Mammary epithelial cell (primary cell): ENCODE measurements at regions of chr9 and their contacts with region 1.

Region 1: DNA sequence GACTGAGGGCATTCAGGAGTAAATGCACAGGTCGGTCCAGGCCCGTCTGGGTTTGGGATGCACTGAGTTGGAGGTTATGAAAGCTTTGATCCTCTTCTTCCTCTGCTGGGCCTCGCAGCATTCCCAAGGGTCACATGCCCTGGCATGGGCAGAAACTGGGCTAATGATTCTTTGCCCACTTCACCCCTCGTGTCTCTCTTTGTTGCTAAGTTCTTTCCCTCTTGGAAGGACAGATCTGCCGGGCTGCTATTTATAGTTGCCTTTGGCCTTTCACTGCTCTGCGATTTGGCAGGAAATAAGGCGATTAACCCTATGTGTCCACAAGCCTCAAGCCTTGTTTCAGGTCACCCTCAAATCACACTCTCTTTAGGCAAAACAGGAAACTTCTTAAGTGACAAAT is 66.9 kb downstream of the ENTREP1 start:
- DNase-seq: no peak
- H3K4me3 ChIP-seq: no peak overlapping the region
- H3K27ac ChIP-seq: no peak overlapping the region
- H3K4me1 ChIP-seq: no peaks in the 10 kb centered on the region
- H3K27me3 ChIP-seq: no peaks in the 10 kb centered on the region
- CTCF ChIP-seq: no peak

Region 2: GRCh38 chr9:69295872-69296552 is 95.9 kb before region 1 on chr9:
- CTCF ChIA-PET with region 1: no interaction called
- dilution Hi-C with region 1: loop called (anchors 5 kb)
- in situ Hi-C with region 1: no loop called
- intact Hi-C with region 1: no loop called
- DNase-seq: no peak
- H3K4me3 ChIP-seq: no peak overlapping the region
- H3K27ac ChIP-seq: no peak overlapping the region
- H3K4me1 ChIP-seq: no peaks in the 10 kb centered on the region
- H3K27me3 ChIP-seq: no peaks in the 10 kb centered on the region
- CTCF ChIP-seq: no peak

Region 3: DNA sequence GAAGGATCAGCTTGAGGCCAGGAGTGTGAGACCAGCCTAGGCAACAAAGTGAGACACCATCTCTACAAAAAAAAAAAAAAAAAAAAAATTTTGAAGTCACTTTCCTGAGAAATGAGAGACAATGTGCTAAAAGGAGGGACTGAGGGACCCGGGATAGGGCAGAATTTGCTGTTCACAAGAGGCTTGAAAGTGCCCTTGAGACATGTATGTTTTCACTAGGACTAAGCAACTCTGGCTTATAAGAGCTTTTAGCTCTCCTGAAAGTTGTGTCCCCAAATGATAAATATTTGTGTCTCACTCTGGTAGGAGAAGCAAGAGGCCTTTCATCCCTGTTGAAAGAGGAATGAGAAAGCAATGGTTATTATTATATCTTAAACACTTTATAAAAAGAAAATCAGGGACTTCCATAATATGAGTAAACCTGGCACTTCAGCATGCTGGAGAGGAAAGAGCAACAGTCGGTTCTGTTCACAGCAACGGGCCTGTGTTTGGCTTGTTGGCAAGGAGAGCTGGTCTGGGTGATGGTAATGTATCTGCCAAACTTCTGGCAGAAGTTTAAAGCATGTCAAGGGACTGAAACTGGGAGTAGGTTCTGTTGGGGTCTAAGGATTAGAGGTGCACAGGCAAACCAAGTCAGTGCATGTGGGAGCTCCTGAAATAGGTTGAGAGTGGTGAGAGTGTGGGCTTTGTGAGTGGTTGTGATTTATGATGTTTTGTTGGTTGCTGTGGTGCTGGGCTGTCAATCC is 34.7 kb before region 1 on chr9:
- CTCF ChIA-PET with region 1: no interaction called
- dilution Hi-C with region 1: no loop called
- in situ Hi-C with region 1: no loop called
- intact Hi-C with region 1: no loop called
- DNase-seq: no peak
- H3K4me3 ChIP-seq: no peak overlapping the region
- H3K27ac ChIP-seq: no peak overlapping the region
- H3K4me1 ChIP-seq: no peaks in the 10 kb centered on the region
- H3K27me3 ChIP-seq: no peaks in the 10 kb centered on the region
- CTCF ChIP-seq: no peak